ENCODE measurements at regions of chr3 and their contacts with region 1.

Region 1: GRCh38 chr3:58532794-58533220 is 4.2 kb downstream of the ACOX2 start:
- DNase-seq: peak; percentile 83

Region 2: GRCh38 chr3:58305882-58306711 is 226.7 kb before region 1 on chr3 and contains the starts of genes HTD2 and RPP14:
- intact Hi-C with region 1: loop called (anchors 5 kb)
- DNase-seq: peak; percentile 99
- total RNA-seq, gene HTD2: 12.9 TPM
- total RNA-seq, gene RPP14: 17.0 TPM

Region 3: GRCh38 chr3:58463181-58463941 is 69.4 kb before region 1 on chr3:
- intact Hi-C with region 1: loop called (anchors 1 kb)
- DNase-seq: peak; percentile 76